ENCODE measurements at regions of chr10 and their contacts with region 1.

Region 1: GRCh38 chr10:70052462-70053217 is at the start of gene MACROH2A2:
- DNase-seq: no peak
- H3K4me3 Mint-ChIP-seq: peak within 1 kb of the TSS; percentile 88
- H3K27ac Mint-ChIP-seq: peak within 1 kb of the TSS; percentile 40
- H3K4me1 Mint-ChIP-seq: peaks cover 9% of the 10 kb centered on the region
- H3K27me3 Mint-ChIP-seq: peaks cover 51% of the 10 kb centered on the region
- total RNA-seq, gene MACROH2A2: 3.4 and 3.5 TPM in 2 replicates

Region 2: GRCh38 chr10:69573056-69573806 is 479.4 kb before region 1 on chr10 and contains the start of gene NEUROG3:
- intact Hi-C with region 1: loop called (anchors 5 kb)
- DNase-seq: no peak
- H3K4me3 Mint-ChIP-seq: peak within 1 kb of the TSS; percentile 33
- H3K27ac Mint-ChIP-seq: no peak within 1 kb of the TSS
- H3K4me1 Mint-ChIP-seq: peaks cover 13% of the 10 kb centered on the region
- H3K27me3 Mint-ChIP-seq: peaks cover 88% of the 10 kb centered on the region
- total RNA-seq, gene NEUROG3: not detected in 2 replicates